A673 (cell line): ENCODE measurements at regions of chr1 and their contacts with region 1.

Region 1: GRCh38 chr1:92291372-92291999 is 7.3 kb downstream of the GLMN start:
- DNase-seq: peak; percentile 72
- H3K4me3 ChIP-seq: no peak overlapping the region
- H3K27ac ChIP-seq: no peak overlapping the region
- H3K4me1 ChIP-seq: no peaks in the 10 kb centered on the region
- H3K27me3 ChIP-seq: no peaks in the 10 kb centered on the region
- CTCF ChIP-seq: peak; percentile 89

Region 2: GRCh38 chr1:91511386-91511785 is 780.1 kb before region 1 on chr1:
- CTCF ChIA-PET with region 1: no interaction called
- POLR2A ChIA-PET with region 1: no interaction called
- intact Hi-C with region 1: loop called (anchors 5 kb)
- DNase-seq: peak; percentile 66
- H3K4me3 ChIP-seq: no peak overlapping the region
- H3K27ac ChIP-seq: no peak overlapping the region
- H3K4me1 ChIP-seq: peaks cover 21% of the 10 kb centered on the region
- H3K27me3 ChIP-seq: no peaks in the 10 kb centered on the region
- CTCF ChIP-seq: peak; percentile 71

Region 3: DNA sequence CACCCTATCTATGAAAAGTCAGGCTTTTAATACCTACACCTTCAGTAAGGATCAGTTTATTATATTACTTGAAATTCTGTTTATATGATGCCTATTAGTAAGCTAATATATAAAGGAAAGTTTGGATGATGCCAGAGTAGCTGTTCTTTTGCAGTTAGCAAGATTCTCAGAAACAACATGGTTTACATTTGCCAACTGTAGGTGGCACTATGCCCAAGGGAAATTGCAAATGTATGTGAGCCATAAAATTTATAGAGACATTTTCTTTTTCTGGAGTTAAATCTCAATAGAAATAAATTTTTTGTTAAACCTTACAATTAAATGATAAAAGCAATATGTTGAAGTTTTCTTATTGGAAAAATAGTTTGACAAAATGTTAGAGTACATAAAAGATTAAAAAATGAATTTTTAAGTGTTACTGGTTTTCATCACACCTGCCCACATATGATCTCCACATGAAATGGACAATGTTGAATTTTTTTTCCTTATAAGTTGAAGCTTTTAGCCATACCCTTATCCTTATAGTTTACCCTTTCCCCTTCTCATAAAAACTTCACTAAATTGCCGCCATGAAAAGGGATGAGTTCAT is 293.8 kb before region 1 on chr1:
- CTCF ChIA-PET with region 1: interaction called, 10 read pairs
- POLR2A ChIA-PET with region 1: no interaction called
- intact Hi-C with region 1: loop called (anchors 1 kb)
- DNase-seq: peak; percentile 72
- H3K4me3 ChIP-seq: no peak overlapping the region
- H3K27ac ChIP-seq: no peak overlapping the region
- H3K4me1 ChIP-seq: no peaks in the 10 kb centered on the region
- H3K27me3 ChIP-seq: no peaks in the 10 kb centered on the region
- CTCF ChIP-seq: peak; percentile 77